ENCODE measurements at regions of chr6 and their contacts with region 1.

Region 1: GRCh38 chr6:33585403-33586107 is 5.5 kb upstream of the BAK1 start:
- DNase-seq: peak; percentile 85 to 94
- ATAC-seq: peak; percentile 83
- H3K4me3 ChIP-seq: no peak overlapping the region
- H3K27ac ChIP-seq: no peak overlapping the region
- H3K4me1 ChIP-seq: no peaks in the 10 kb centered on the region
- H3K27me3 ChIP-seq: no peaks in the 10 kb centered on the region

Region 2: DNA sequence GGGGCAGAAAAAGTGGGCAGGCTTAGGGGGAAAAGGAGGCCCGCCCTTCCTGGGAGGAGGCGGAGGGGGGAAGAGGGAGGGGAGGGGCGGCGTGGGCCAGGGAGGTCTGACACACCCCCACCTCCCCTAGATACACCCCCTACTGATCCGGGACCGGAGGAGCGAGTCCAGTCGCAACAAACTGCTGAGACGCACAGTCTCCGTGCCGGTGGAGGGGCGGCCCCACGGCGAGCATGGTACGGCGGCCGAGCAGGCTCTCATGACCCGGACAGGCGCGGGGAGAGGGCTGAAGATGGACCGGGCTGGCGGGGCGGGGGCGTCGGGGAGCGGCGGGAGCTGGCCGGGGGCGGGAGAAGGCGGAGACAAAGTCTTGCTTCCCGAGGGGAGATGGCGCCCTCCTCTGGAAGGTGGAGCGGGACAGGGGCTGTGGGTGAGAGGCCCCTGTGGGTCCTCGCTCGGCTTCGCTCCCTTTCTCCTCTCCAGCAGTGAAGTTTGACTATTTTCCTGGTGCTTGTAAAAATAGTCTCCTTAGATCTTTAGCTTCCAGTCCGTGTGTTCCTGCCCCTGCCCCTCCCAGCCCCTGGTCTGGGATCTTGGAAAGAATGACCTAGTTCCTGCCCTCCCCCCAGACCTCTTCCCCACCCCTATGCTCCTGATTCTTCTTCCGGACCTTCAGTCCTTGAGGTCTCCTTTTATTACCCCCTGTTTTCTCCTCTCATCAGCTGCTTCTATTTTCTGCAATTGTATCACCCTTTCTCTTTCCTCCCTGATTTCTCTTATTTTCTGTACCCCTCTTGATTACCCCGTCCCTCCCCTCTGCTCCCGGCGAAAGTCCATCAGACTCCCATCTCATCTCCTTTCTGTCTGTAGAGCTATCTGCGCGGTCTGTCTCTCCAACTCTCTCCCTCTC is 159.6 kb before region 1 on chr6:
- intact Hi-C with region 1: no loop called
- DNase-seq: peak; percentile 92 to 96
- ATAC-seq: peak; percentile 87
- H3K4me3 ChIP-seq: peak overlapping the region; percentile 42 to 44
- H3K27ac ChIP-seq: peak overlapping the region; percentile 68 to 72
- H3K4me1 ChIP-seq: peaks cover 1 to 3% of the 10 kb centered on the region in 2 donors
- H3K27me3 ChIP-seq: no peaks in the 10 kb centered on the region

Region 3: DNA sequence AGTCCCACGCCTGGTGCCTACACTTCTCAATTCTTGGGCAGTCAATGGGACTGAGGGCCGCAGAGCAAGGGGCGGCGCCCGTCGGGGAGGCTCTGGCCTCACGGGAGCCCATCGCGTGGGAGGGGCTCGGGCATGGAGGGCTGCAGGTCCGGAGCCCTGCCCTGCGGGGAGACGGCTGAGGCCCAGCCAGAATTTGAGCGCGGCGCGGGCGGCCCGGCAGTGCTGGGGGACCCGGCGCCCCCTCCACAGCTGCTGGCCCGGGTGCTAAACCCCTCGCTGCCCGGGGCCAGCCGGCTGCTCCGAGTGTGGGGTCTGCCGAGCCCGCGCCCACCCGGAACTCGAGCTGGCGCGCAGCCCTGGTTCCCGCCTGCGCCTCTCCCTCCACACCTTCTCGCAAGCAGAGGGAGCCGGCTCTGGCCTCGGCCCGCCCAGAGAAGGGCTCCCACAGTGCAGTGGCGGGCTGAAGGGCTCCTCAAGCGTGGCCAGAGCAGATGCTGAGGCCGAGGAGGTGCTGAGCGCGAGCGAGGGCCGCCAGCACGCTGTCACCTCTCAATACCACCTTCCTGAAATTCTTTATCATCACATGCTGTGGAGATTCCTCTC is 64.0 kb before region 1 on chr6:
- intact Hi-C with region 1: no loop called
- DNase-seq: no peak
- ATAC-seq: no peak
- H3K4me3 ChIP-seq: no peak overlapping the region
- H3K27ac ChIP-seq: no peak overlapping the region
- H3K4me1 ChIP-seq: no peaks in the 10 kb centered on the region
- H3K27me3 ChIP-seq: no peaks in the 10 kb centered on the region

Region 4: DNA sequence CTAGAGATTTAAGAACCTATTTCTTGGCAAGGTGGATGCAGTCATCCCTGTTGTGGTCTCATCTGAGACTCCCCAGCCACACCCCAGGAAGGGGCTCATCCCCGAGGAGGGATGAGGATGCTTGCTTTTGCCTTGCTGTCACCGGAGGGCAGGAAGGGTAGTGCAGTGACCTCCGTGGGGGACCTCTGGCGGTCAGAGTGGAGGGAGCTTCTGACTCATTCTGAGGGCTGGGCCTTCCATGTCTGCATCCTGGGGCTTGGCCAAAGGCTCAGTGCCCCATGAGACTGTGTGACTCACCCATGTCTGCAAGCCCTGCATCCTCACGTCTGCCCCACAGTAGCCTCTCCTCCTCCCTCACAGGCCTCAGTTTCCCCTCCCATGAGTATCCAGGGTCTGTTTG is 87.3 kb after region 1 on chr6:
- intact Hi-C with region 1: loop called in 1 of 2 experiments (anchors 5 kb)
- DNase-seq: peak; percentile 94 to 96
- ATAC-seq: peak; percentile 86
- H3K4me3 ChIP-seq: no peak overlapping the region
- H3K27ac ChIP-seq: no peak overlapping the region
- H3K4me1 ChIP-seq: no peaks in the 10 kb centered on the region
- H3K27me3 ChIP-seq: no peaks in the 10 kb centered on the region

Region 5: DNA sequence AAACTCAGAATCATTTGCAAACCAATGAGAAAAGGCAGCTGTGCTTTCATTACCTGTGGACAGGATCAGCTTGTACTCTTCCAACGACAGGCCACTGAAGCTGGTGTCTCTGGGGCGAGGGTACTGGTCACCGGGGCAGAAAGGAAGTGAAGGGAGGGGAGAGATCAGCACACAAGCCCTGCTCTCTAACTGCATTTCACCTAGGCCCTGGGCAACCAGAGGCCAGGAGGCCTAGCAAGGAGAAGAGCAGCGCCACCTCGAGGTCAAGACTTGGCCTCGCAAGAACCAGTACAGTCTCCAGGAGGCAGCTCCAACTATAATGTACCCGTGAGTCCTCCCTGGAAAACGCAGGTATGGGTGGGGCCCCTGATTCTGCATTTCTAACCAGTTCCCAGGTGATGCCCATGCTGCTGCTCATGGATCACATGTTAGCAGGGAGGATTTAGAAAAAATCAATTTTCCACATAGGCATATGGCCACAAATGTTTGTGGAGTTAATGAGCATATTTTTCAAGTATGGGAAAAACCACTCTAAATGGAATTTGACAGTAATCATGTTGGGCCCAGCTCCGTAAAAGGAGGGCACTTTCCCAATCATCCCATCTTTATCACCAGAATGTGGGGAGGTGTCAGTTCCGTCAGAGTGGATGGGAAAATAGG is 115.0 kb after region 1 on chr6:
- intact Hi-C with region 1: loop called in 1 of 2 experiments (anchors 2 kb)
- DNase-seq: peak; percentile 71 to 83
- ATAC-seq: peak; percentile 40
- H3K4me3 ChIP-seq: no peak overlapping the region
- H3K27ac ChIP-seq: no peak overlapping the region
- H3K4me1 ChIP-seq: no peaks in the 10 kb centered on the region
- H3K27me3 ChIP-seq: no peaks in the 10 kb centered on the region